ENCODE measurements at regions of chr17 and their contacts with region 1.

Region 1: GRCh38 chr17:76014184-76014924 is 12.8 kb downstream of the EVPL start:
- DNase-seq: peak in 1 of 2 donors; percentile 33
- H3K4me3 ChIP-seq: no peak overlapping the region
- CTCF ChIP-seq: peak in 2 of 3 donors; percentile 84 to 86
- POLR2A ChIP-seq: no peak

Region 2: GRCh38 chr17:75625813-75626486 is 388.4 kb before region 1 on chr17:
- intact Hi-C with region 1: no loop called
- DNase-seq: no peak
- H3K4me3 ChIP-seq: no peak overlapping the region
- CTCF ChIP-seq: no peak
- POLR2A ChIP-seq: no peak

Region 3: DNA sequence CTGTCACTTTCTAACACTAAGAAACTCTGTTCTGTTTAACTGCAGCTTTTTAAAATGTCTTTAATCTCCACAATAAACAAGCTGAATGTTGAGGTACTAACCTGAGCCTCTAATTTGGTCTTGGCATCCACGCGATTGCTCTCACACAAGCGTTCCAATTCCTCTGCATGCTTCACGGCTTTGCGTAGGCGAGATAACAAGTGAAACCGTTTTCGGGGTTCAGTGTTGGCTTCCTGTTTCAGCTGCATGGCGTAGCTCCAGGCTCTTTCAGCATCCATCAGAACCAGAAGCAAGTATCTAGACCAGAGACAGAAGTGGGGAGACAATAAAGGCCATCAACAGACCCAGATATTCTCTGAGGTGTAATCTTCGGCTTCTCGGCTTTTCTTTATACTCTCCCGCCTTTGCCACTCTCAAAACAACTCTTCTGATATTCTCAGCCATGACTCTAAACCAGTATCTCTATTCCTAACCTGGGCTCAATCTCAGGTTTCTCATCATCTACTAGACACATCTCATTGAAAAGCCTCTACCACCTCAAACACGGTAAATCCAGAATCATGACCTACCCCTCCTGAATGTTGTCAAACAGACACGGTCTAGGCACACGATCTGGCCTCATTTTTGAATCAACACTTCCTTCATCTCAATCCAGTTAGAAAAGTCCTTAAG is 49.7 kb after region 1 on chr17:
- intact Hi-C with region 1: loop called (anchors 5 kb)
- DNase-seq: no peak
- H3K4me3 ChIP-seq: no peak overlapping the region
- CTCF ChIP-seq: no peak
- POLR2A ChIP-seq: no peak

Measured in lower leg skin (tissue), 4 donors.